Transverse colon (tissue), 4 donors: ENCODE measurements at regions of chr12 and their contacts with region 1.

Region 1: DNA sequence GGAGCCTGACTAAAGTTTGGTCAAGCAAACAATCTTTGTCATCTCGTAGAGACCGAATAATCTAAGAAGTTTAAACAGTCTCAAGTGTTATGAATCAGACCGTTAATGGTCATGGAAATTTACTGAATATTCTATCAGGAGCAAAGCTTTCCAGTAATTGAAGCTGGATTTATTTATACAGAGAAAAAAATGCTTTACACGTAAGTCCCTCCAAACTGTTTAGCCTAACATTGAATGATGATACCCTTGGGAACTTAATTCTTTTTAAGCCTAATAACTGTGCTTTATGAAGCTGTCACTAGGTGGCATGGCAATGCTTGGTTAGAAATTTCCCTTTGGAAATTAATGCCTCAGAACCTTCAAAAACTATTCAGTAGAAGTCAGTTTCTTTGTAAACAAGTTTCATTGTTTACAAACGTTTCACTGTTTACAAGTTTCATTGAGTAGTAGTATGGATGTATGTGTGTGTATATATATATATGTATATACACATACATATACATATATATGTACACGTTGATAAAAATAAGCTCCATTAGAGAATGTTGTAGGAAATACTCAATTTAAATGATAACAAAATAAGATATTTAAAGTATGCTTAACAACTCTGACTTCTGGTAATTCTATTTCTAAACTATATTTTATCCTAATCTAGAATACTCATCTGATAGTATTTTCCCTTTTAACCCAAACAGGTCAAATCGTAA is 32.1 kb downstream of the DEPDC4 start:
- DNase-seq: no peak
- H3K4me3 ChIP-seq: no peak overlapping the region
- H3K27ac ChIP-seq: peak overlapping the region in 3 of 4 donors; percentile 1 to 31 (median 15)
- H3K4me1 ChIP-seq: peaks cover 0 to 12% (median 0%) of the 10 kb centered on the region in 4 donors
- H3K27me3 ChIP-seq: no peaks in the 10 kb centered on the region
- CTCF ChIP-seq: peak; percentile 63 to 69 (median 66)
- EP300 ChIP-seq: no peak
- POLR2A ChIP-seq: no peak

Region 2: DNA sequence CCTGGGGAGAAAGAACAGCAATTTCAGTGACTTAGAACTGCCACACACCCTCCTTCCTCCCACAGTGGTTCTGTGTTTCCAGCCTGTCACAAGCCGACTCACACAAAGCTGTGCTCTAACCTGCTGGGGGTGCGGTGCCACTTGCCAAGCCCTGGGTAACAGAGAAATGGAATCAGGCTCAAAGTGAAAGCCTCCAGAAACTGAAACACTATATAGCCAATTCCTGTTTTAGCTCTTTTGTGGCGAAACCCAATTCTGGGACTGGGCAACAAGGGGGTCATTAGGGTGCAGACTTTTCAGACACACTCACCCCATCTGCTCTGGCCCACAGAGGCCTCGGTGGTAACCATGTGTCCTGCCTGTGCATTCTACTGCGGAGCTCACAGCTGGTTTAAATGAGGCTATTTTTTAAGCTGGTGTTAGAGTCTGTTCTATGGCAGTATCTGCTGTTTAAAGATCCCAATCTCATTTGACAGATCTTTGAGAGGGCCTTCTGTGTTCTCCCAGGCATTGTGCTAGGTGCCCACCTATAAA is 49.3 kb before region 1 on chr12:
- in situ Hi-C with region 1: no loop called
- intact Hi-C with region 1: no loop called
- DNase-seq: no peak
- H3K4me3 ChIP-seq: no peak overlapping the region
- H3K27ac ChIP-seq: peak overlapping the region in 3 of 4 donors; percentile 21 to 61 (median 22)
- H3K4me1 ChIP-seq: peaks cover 0 to 9% (median 3%) of the 10 kb centered on the region in 4 donors
- H3K27me3 ChIP-seq: no peaks in the 10 kb centered on the region
- CTCF ChIP-seq: no peak
- EP300 ChIP-seq: no peak
- POLR2A ChIP-seq: no peak

Region 3: GRCh38 chr12:100279607-100280244 is 45.0 kb after region 1 on chr12:
- in situ Hi-C with region 1: no loop called
- intact Hi-C with region 1: no loop called
- DNase-seq: no peak
- H3K4me3 ChIP-seq: no peak overlapping the region
- H3K27ac ChIP-seq: no peak overlapping the region
- H3K4me1 ChIP-seq: peaks cover 0 to 12% (median 4%) of the 10 kb centered on the region in 4 donors
- H3K27me3 ChIP-seq: no peaks in the 10 kb centered on the region
- CTCF ChIP-seq: no peak
- EP300 ChIP-seq: no peak
- POLR2A ChIP-seq: no peak

Region 4: GRCh38 chr12:100554608-100555077 is 319.9 kb after region 1 on chr12:
- in situ Hi-C with region 1: loop called (anchors 10 to 25 kb)
- intact Hi-C with region 1: loop called (anchors 10 kb)
- DNase-seq: no peak
- H3K4me3 ChIP-seq: no peak overlapping the region
- H3K27ac ChIP-seq: no peak overlapping the region
- H3K4me1 ChIP-seq: peaks cover 0 to 6% (median 1%) of the 10 kb centered on the region in 4 donors
- H3K27me3 ChIP-seq: no peaks in the 10 kb centered on the region
- CTCF ChIP-seq: peak; percentile 83 to 98 (median 86)
- EP300 ChIP-seq: no peak
- POLR2A ChIP-seq: no peak

Region 5: GRCh38 chr12:100573292-100574186 is 338.8 kb after region 1 on chr12 and contains the start of gene GAS2L3:
- in situ Hi-C with region 1: loop called in 1 of 4 experiments (anchors 25 kb)
- intact Hi-C with region 1: no loop called
- DNase-seq: peak; percentile 91
- H3K4me3 ChIP-seq: peak within 1 kb of the TSS; percentile 57 to 66 (median 62)
- H3K27ac ChIP-seq: peak within 1 kb of the TSS; percentile 77 to 90 (median 87)
- H3K4me1 ChIP-seq: peaks cover 0 to 26% (median 10%) of the 10 kb centered on the region in 4 donors
- H3K27me3 ChIP-seq: no peaks in the 10 kb centered on the region
- CTCF ChIP-seq: no peak
- EP300 ChIP-seq: no peak
- POLR2A ChIP-seq: peak; percentile 91
- total RNA-seq, gene GAS2L3: 0.80 to 15.7 (median 7.6) TPM

Region 6: GRCh38 chr12:100733817-100734593 is 499.3 kb after region 1 on chr12:
- in situ Hi-C with region 1: loop called in 1 of 4 experiments (anchors 25 kb)
- intact Hi-C with region 1: no loop called
- DNase-seq: no peak
- H3K4me3 ChIP-seq: no peak overlapping the region
- H3K27ac ChIP-seq: no peak overlapping the region
- H3K4me1 ChIP-seq: no peaks in the 10 kb centered on the region
- H3K27me3 ChIP-seq: no peaks in the 10 kb centered on the region
- CTCF ChIP-seq: peak; percentile 42 to 62 (median 49)
- EP300 ChIP-seq: no peak
- POLR2A ChIP-seq: no peak